ENCODE measurements at regions of chr7 and their contacts with region 1.

Region 1: GRCh38 chr7:43905956-43906330 is 453 bp downstream of the URGCP start:
- DNase-seq: peak; percentile 37
- H3K4me3 Mint-ChIP-seq: peak overlapping the region; percentile 80
- H3K27ac Mint-ChIP-seq: peak overlapping the region; percentile 85
- H3K4me1 Mint-ChIP-seq: peaks cover 11% of the 10 kb centered on the region
- H3K27me3 Mint-ChIP-seq: no peaks in the 10 kb centered on the region
- CTCF ChIP-seq: no peak

Region 2: GRCh38 chr7:43895847-43896415 is 10.0 kb before region 1 on chr7:
- CTCF ChIA-PET with region 1: interaction called, 12 read pairs
- intact Hi-C with region 1: no loop called
- DNase-seq: no peak
- H3K4me3 Mint-ChIP-seq: no peak overlapping the region
- H3K27ac Mint-ChIP-seq: no peak overlapping the region
- H3K4me1 Mint-ChIP-seq: peaks cover 8% of the 10 kb centered on the region
- H3K27me3 Mint-ChIP-seq: no peaks in the 10 kb centered on the region
- CTCF ChIP-seq: no peak